Activated CD4-positive, alpha-beta memory T cell treated with anti-CD3 and anti-CD28 coated beads, Interleukin-2, amount 10 ng/mL, durations not matched to agents 7 days and 5 days (primary cell): ENCODE measurements at regions of chr14 and their contacts with region 1.

Region 1: DNA sequence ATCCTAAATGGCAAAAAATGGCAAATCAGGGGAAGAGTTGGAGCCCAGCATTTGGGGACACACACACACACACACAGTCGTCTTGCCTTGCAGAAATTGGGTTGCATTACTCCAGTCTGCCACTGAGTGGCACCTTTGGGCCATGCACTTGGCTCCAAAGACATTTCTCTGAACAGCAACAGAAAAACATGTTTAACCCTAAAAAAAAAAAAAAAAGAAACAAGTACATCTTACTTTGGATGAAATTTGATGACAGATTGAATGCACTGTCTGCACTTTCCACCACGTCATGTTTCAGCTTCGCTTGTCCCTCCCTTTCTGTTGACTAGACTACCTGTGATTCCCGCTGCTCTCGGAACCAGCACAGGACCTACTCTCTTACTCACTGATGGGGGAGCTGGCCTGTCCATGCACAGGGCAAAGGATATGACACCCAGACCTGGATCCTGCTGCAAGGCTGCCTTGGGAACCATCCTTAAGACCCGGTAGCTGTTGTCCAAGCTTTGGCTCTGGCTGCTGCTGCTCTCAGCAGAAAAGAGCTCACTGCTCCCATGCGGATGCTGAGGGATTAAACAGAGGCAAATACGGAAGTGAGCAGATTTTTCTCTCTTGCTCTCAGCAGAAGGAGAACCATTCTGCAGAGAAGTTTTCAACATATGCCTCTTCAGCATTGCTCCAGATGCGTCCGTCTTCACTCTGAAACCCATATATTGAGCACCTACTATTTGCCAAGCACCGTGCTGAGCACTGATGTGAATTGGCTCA is 376.8 kb downstream of the DPF3 start:
- DNase-seq: peak; percentile 87
- H3K4me3 Mint-ChIP-seq: no peak overlapping the region
- H3K27ac Mint-ChIP-seq: peak overlapping the region; percentile 98
- H3K4me1 Mint-ChIP-seq: peaks cover 78% of the 10 kb centered on the region
- H3K27me3 Mint-ChIP-seq: peaks cover 3% of the 10 kb centered on the region

Region 2: GRCh38 chr14:72443991-72444441 is 73.1 kb before region 1 on chr14:
- CTCF ChIA-PET with region 1: interaction called, 11 read pairs
- POLR2A ChIA-PET with region 1: interaction called, 22 read pairs
- DNase-seq: peak; percentile 76
- H3K4me3 Mint-ChIP-seq: peak overlapping the region; percentile 12
- H3K27ac Mint-ChIP-seq: peak overlapping the region; percentile 84
- H3K4me1 Mint-ChIP-seq: peaks cover 89% of the 10 kb centered on the region
- H3K27me3 Mint-ChIP-seq: no peaks in the 10 kb centered on the region

Region 3: DNA sequence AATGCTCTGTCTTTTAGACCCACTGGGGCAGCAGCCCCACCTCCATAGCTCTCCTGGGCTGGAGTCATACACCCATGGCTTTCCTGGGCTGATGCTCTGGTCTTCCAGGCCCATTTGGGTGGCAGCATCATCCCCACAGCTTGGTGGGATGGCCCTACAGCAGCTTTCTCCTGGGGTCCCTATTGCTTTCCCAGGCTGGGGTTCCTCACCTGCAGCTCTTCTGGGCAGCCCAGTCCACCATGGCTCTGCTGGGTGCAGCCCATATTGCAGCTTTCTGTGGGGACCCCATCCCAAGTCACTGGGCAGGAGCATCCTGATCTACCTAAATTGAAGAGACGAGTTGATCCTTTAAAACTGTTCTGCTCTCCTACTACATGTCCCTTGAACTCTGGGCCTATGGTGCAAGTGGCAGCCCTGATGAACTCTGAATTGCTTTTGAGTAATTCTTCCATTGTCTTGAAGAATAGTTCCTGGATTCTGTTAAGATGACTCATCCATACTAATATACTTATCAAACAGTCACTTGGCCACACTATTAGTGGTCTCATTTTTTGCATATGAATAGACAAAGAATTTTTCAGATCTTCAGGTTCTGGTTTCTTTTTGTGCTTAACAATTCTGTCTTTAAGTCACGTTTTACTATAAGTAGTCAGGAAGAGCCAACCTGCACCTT is 13.3 kb before region 1 on chr14:
- CTCF ChIA-PET with region 1: interaction called, 11 read pairs
- POLR2A ChIA-PET with region 1: interaction called, 4 read pairs
- DNase-seq: no peak
- H3K4me3 Mint-ChIP-seq: no peak overlapping the region
- H3K27ac Mint-ChIP-seq: no peak overlapping the region
- H3K4me1 Mint-ChIP-seq: no peaks in the 10 kb centered on the region
- H3K27me3 Mint-ChIP-seq: peaks cover 14% of the 10 kb centered on the region

Region 4: DNA sequence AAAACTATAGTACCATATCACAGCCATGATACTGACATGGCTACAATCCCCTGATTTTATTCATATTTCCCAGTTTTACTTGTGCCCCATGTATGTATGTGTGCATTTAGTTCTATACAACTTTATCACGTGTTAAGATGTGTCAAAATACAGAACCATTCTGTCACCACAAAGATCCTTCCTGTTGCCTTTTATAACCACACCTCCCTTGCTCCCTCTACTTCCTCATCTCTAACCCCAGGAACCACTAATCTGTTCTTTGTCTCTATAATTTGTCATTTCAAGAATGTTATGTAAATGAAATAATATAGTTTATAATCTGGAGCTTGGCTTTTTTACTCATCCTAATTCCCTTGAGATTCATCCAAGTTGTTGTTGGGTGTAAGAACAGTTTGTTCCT is 18.4 kb after region 1 on chr14:
- CTCF ChIA-PET with region 1: interaction called, 17 read pairs
- POLR2A ChIA-PET with region 1: interaction called, 29 read pairs
- DNase-seq: no peak
- H3K4me3 Mint-ChIP-seq: peak overlapping the region; percentile 6
- H3K27ac Mint-ChIP-seq: peak overlapping the region; percentile 55
- H3K4me1 Mint-ChIP-seq: peaks cover 74% of the 10 kb centered on the region
- H3K27me3 Mint-ChIP-seq: peaks cover 7% of the 10 kb centered on the region

Region 5: GRCh38 chr14:72893636-72894321 is 376.7 kb after region 1 on chr14 and contains the start of gene DPF3:
- CTCF ChIA-PET with region 1: interaction called, 33 read pairs
- POLR2A ChIA-PET with region 1: interaction called, 47 read pairs
- DNase-seq: peak; percentile 98
- H3K4me3 Mint-ChIP-seq: peak within 1 kb of the TSS; percentile 92
- H3K27ac Mint-ChIP-seq: peak within 1 kb of the TSS; percentile 41
- H3K4me1 Mint-ChIP-seq: peaks cover 35% of the 10 kb centered on the region
- H3K27me3 Mint-ChIP-seq: peaks cover 61% of the 10 kb centered on the region
- total RNA-seq, gene DPF3: 14.9 to 15.4 TPM

Region 6: GRCh38 chr14:72948481-72949138 is 431.5 kb after region 1 on chr14:
- CTCF ChIA-PET with region 1: interaction called, 97 read pairs
- POLR2A ChIA-PET with region 1: interaction called, 8 read pairs
- DNase-seq: peak; percentile 75
- H3K4me3 Mint-ChIP-seq: no peak overlapping the region
- H3K27ac Mint-ChIP-seq: no peak overlapping the region
- H3K4me1 Mint-ChIP-seq: peaks cover 19% of the 10 kb centered on the region
- H3K27me3 Mint-ChIP-seq: no peaks in the 10 kb centered on the region